ENCODE measurements at regions of chr3 and their contacts with region 1.

Region 1: DNA sequence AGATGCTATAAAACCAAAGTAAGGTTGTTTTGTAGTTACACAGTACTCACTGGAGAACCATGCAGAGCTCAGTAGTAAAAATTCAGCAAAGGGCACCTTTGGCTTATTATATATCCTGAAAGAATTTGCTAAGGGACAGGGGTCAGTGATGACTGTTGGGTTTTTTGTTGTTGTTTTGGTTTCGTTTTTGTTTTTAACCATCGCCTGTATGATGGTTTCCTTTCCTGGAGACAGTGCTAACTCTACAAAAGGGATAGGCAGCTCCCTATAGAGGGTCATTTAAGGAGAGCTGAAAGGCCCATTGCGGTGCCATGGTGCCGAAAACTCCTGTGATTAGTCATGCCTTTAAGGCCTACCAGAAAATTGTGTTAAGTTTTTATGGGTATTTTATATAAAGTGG is 118.2 kb upstream of the GOLIM4 start:
- DNase-seq: no peak
- ATAC-seq: no peak

Region 2: GRCh38 chr3:168021737-168022450 is 192.0 kb before region 1 on chr3:
- intact Hi-C with region 1: no loop called
- DNase-seq: no peak
- ATAC-seq: no peak

Region 3: GRCh38 chr3:168467115-168467714 is 253.3 kb after region 1 on chr3:
- intact Hi-C with region 1: loop called (anchors 5 kb)
- DNase-seq: no peak
- ATAC-seq: peak; percentile 78

Region 4: DNA sequence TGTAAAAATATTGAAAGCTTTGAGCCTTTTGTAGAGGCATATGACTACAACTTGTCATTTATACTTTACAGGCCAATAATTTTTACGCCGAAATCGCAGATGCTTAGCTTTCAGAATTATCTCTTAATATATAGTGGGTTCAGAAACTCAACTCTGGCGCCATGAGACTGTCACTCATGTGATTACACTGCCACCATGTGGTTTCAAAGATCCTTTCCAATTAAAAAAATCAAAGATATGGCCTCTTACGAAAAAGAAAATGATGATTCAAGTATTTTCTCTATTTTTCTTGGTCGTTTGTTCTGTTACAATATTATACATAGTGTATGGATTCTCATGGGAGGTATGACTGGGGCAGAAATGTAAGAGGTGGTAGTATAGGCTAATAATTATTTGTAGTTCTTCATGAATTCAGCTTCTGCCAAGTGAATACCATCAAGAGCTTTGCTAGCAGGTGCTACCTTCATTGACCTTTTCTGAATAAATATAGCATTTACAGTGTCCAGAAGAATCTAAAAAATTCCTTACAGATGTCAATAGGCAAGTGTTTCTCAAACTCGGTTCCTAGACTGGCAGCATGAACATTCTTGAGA is 633.5 kb after region 1 on chr3:
- intact Hi-C with region 1: loop called (anchors 1 kb)
- DNase-seq: no peak
- ATAC-seq: no peak

Measured in left ventricle myocardium superior (tissue), 1 donor.